HEK293 (cell line): ENCODE measurements at regions of chr12 and their contacts with region 1.

Region 1: GRCh38 chr12:54439521-54440255 is 20.6 kb upstream of the ITGA5 start:
- H3K4me3 ChIP-seq: no peak overlapping the region
- H3K27ac ChIP-seq: no peak overlapping the region
- H3K4me1 ChIP-seq: no peaks in the 10 kb centered on the region
- CTCF ChIP-seq: peak; percentile 66

Region 2: GRCh38 chr12:54368709-54369583 is 70.7 kb before region 1 on chr12:
- CTCF ChIA-PET with region 1: interaction called, 11 read pairs
- POLR2A ChIA-PET with region 1: interaction called, 3 read pairs
- H3K4me3 ChIP-seq: no peak overlapping the region
- H3K27ac ChIP-seq: no peak overlapping the region
- H3K4me1 ChIP-seq: peaks cover 10% of the 10 kb centered on the region
- CTCF ChIP-seq: peak; percentile 79

Region 3: GRCh38 chr12:54390668-54391551 is 48.8 kb before region 1 on chr12:
- CTCF ChIA-PET with region 1: interaction called, 924 read pairs
- POLR2A ChIA-PET with region 1: no interaction called
- H3K4me3 ChIP-seq: peak overlapping the region; percentile 53
- H3K27ac ChIP-seq: peak overlapping the region; percentile 44; the same call in 1 of the 2 replicates
- H3K4me1 ChIP-seq: peaks cover 21% of the 10 kb centered on the region
- CTCF ChIP-seq: peak; percentile 91

Region 4: GRCh38 chr12:54398995-54399793 is 40.5 kb before region 1 on chr12:
- CTCF ChIA-PET with region 1: interaction called, 924 read pairs
- POLR2A ChIA-PET with region 1: interaction called, 15 read pairs
- H3K4me3 ChIP-seq: no peak overlapping the region
- H3K27ac ChIP-seq: no peak overlapping the region
- H3K4me1 ChIP-seq: no peaks in the 10 kb centered on the region
- CTCF ChIP-seq: peak; percentile 96

Region 5: DNA sequence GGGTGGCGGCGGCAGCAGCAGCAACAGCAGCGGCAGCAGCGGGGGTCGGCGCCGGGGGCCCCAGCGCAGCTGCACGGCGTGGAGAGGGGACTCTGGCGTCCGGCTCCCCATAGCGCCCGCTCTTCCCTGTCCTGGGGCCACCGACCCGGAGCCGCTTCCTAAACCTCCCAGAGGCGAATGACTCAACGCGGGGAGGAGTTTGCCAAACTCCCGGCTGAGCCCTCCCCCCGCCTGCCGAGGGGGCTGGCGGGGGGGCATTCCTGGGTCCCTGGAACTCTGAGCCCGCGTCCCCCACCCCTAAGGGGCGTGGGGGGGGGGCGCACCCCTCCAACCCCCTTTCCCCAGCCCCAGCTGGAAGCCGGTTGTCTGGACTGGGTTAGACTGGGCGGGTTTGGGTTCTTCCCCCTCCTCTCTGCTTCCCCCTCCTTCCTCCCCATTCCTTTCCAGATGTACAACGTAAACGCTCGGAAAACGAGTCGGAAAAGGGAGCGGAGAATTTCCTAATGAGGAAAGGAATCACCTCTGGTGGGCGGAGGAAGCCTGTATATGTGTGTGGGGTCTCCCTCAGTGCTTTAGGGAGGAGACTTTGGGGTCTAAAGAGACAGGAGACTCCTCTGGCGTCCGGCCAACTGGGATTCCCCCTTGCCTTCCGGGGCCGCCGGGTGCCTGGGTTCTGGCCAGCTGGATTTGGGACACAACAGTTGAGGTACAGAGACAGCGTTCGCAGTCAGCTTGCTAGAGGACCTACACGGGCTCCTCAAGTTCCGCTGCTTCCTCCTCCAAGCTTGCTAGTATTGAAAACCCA is 20.4 kb before region 1 on chr12 and contains the start of gene ITGA5:
- CTCF ChIA-PET with region 1: interaction called, 93 read pairs
- POLR2A ChIA-PET with region 1: no interaction called
- H3K4me3 ChIP-seq: peak within 1 kb of the TSS; percentile 74
- H3K27ac ChIP-seq: peak within 1 kb of the TSS; percentile 78; the same call in 1 of the 2 replicates
- H3K4me1 ChIP-seq: peaks cover 11% of the 10 kb centered on the region
- CTCF ChIP-seq: no peak

Region 6: DNA sequence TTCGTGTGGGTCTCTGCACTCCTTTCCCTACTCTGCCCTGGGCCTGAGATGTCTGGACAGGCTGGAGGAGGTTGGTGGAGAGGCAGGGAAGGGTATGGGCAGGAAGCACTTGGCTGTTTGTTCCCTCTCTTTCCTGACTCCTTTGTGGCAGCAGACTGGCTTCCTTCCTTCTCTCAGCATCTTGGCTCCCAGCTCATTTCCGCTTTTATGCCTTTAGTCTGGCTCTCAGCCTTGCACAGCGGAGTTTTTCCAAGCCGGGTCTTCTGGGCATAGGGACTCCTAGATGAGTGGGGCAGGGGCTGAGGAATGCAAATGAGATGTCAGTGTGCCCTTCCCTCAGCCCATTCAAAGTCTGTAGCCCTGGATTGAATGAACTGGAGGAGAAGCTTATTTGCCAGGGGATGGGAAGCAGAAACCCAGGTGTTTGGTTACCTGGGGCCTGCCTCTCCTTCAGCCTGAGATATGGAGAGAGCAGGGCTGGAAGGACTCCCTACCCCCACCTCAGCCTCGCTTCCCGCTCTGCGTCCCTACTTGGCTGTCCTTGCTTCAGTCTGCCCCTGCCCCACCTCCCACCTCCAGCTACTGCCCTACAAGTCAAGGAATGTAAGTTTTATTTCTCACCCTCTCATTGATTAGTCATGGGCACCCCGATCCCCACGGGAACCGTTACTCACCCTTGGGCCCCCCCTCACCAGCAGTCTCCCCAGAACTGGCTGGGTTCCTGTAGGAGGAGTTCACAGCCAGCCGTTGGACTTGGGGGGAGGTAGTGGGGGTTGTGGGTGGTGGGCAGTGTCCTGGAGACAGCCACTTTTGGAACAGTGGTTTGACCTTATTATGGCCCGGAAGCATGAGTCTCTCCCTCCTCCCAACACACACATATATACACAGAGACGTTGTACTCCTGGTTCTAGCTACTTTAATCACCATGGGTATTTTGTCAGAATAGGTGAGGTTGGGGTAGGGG is 11.4 kb before region 1 on chr12:
- CTCF ChIA-PET with region 1: interaction called, 27 read pairs
- POLR2A ChIA-PET with region 1: no interaction called
- H3K4me3 ChIP-seq: no peak overlapping the region
- H3K27ac ChIP-seq: no peak overlapping the region
- H3K4me1 ChIP-seq: peaks cover 14% of the 10 kb centered on the region
- CTCF ChIP-seq: no peak

Region 7: GRCh38 chr12:54463034-54463433 is 23.3 kb after region 1 on chr12:
- CTCF ChIA-PET with region 1: interaction called, 10 read pairs
- POLR2A ChIA-PET with region 1: no interaction called
- H3K4me3 ChIP-seq: no peak overlapping the region
- H3K27ac ChIP-seq: no peak overlapping the region
- H3K4me1 ChIP-seq: peaks cover 31% of the 10 kb centered on the region
- CTCF ChIP-seq: no peak